Tibial artery (tissue), 4 donors: ENCODE measurements at regions of chr12 and their contacts with region 1.

Region 1: DNA sequence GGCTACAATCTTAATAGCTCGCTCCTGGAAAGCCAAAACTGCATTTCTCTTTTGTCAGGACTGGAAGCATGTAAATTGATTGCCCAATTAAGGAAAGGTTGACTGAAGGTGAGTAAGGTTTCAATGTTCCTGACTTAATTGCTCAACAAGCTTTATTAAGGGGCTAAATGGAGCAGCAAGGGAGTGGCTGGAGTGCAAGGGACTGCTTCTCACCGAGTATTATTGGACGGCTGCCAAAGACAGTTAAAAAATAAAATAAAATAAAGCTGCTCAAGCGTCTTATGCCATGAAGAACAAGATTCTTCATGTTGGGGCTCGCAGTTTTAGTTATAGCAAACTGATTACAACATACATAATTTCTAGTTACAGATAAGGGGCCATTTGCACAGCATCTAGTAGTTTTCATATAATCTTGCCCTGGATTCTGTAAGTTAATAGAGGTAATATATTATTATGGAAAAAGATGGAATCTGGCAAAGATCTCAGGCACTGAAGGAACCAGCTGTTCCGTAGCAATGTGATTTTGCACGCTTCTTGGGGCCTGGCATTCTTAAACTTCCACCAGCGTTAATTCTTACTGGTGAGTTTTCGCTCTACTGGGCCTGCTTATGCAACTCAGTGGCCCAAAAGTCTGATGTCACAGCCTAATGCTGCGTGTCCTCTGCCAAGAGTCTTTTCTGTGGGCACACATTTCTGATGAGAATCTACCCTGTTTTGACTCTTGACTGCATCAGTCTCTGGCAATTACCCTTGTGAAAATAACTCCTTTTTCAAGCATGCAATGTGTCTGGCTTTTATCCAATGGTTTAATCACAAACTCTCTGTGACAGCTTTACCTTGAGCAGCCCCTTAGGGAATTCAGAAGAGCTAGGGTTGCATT is 108.5 kb downstream of the SLC38A1 start:
- DNase-seq: peak; percentile 34 to 88
- H3K4me3 ChIP-seq: no peak overlapping the region
- H3K27ac ChIP-seq: peak overlapping the region; percentile 59 to 68
- H3K4me1 ChIP-seq: peaks cover 0 to 46% (median 17%) of the 10 kb centered on the region in 4 donors
- H3K27me3 ChIP-seq: no peaks in the 10 kb centered on the region
- CTCF ChIP-seq: no peak

Region 2: GRCh38 chr12:46268590-46269558 is 108.5 kb after region 1 on chr12 and contains the start of gene SLC38A1:
- intact Hi-C with region 1: loop called (anchors 5 kb)
- DNase-seq: peak; percentile 86 to 95
- H3K4me3 ChIP-seq: peak within 1 kb of the TSS; percentile 70 to 76
- H3K27ac ChIP-seq: peak within 1 kb of the TSS; percentile 88 to 91
- H3K4me1 ChIP-seq: peaks cover 0 to 33% (median 14%) of the 10 kb centered on the region in 4 donors
- H3K27me3 ChIP-seq: no peaks in the 10 kb centered on the region
- CTCF ChIP-seq: no peak